Endothelial cell of umbilical vein (primary cell): ENCODE measurements at regions of chr6 and their contacts with region 1.

Region 1: DNA sequence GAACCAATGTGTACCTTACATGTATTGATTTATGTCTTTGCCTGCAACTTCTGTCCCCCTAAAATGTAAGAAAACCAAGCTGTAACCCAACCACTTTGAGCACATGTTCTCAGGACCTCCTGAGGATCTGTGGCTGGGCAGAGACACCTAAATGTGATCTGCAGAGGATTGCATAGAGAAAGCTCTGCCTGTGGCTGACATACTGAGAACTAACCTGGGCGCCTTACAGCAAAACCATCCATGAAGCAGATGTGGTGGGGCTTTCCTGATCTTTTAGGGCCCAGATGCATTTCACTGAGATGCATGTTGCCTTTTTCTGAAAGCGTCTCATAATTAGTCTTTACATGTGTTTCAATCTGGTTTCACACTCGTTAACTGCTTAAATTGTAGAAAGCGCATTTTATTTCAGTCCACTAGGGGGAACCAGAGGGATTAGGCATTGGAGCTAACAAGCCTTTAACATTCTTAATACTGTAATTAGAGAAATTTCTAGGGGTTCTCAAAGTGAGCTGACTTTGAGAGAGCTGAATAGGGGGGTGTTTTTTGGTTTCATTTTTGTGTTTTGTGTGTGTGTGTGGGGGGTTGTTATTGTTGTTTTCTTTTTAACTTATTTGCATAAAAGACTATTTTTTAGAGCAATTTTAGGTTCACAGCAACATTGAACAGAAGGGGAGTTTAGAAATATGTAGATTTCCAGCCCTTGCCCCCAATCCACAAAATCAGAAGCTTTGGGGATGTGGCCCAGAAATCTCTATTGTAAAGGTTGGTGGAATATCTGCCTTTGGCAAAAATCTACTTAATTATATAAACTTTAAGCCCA is 50.9 kb upstream of the FAM184A start:
- DNase-seq: peak; percentile 77
- H3K4me3 ChIP-seq: peak overlapping the region in 1 of 3 experiments; percentile 31
- H3K27ac ChIP-seq: peak overlapping the region; percentile 92
- H3K4me1 ChIP-seq: peaks cover 22% of the 10 kb centered on the region
- H3K27me3 ChIP-seq: no peaks in the 10 kb centered on the region
- CTCF ChIP-seq: peak; percentile 62 to 64
- POLR2A ChIP-seq: no peak

Region 2: DNA sequence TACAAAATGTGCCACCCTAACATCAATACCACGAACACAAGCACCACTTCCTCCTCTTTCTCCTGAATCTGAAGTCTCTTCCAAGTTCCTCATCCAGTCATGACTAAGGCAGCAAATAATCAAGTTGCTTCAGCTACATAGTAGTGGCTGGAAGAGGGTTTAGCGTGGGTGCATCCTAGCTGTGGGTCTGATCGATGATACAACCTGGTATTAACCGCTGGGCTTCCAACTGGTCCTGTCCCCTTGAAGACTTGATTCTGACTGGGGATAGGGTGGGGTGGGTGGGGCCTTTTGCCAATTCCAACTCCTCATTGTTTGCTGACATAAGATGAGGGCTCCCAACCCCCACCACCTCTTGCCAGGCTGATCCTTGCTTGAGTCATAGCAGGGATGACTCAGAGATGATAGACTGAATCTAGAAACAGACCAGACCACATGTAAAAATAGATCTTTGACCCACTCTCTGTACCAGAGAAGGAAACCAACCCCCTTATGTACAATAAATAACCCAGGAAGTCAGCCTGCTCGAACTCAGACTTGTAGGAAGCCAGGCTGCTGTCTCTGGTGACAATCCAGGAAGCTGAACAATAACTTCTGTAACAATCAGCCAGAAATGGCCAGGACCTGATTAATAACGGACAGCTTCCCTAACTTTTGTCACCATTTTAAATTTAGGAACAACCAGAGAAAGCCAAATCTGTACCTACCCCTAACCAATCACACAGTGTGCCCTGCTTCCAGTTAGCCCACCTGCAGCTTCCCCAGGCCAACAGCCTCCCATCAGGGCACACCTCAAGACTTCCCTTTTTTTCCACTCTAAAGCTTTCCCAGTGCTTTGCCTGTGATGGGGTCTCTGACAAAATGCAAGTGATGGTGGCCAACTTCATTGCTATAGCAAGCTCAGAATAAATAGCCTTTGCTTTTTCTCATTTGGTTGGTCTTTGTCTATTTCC is 18.0 kb after region 1 on chr6:
- CTCF ChIA-PET with region 1: interaction called, 46 read pairs
- POLR2A ChIA-PET with region 1: no interaction called
- dilution Hi-C with region 1: no loop called
- intact Hi-C with region 1: loop called (anchors 1 kb)
- DNase-seq: peak; percentile 77
- H3K4me3 ChIP-seq: no peak overlapping the region
- H3K27ac ChIP-seq: peak overlapping the region; percentile 86
- H3K4me1 ChIP-seq: peaks cover 29% of the 10 kb centered on the region
- H3K27me3 ChIP-seq: no peaks in the 10 kb centered on the region
- CTCF ChIP-seq: no peak
- POLR2A ChIP-seq: no peak